CD14-positive monocyte (primary cell): ENCODE measurements at regions of chr22 and their contacts with region 1.

Region 1: GRCh38 chr22:32528984-32529982 is 54.7 kb downstream of the FBXO7 start:
- DNase-seq: peak; percentile 45 to 66 (median 51)
- H3K4me3 ChIP-seq: no peak overlapping the region
- H3K4me3 Mint-ChIP-seq: no peak overlapping the region
- H3K27ac ChIP-seq: no peak overlapping the region
- H3K27ac Mint-ChIP-seq: peak overlapping the region in 2 of 7 donors; percentile 3 to 33
- H3K4me1 ChIP-seq: no peaks in the 10 kb centered on the region
- H3K4me1 Mint-ChIP-seq: peaks cover 4% of the 10 kb centered on the region
- H3K27me3 ChIP-seq: no peaks in the 10 kb centered on the region
- H3K27me3 Mint-ChIP-seq: peaks cover 1 to 9% (median 3%) of the 10 kb centered on the region in 3 donors
- CTCF ChIP-seq: peak; percentile 83

Region 2: DNA sequence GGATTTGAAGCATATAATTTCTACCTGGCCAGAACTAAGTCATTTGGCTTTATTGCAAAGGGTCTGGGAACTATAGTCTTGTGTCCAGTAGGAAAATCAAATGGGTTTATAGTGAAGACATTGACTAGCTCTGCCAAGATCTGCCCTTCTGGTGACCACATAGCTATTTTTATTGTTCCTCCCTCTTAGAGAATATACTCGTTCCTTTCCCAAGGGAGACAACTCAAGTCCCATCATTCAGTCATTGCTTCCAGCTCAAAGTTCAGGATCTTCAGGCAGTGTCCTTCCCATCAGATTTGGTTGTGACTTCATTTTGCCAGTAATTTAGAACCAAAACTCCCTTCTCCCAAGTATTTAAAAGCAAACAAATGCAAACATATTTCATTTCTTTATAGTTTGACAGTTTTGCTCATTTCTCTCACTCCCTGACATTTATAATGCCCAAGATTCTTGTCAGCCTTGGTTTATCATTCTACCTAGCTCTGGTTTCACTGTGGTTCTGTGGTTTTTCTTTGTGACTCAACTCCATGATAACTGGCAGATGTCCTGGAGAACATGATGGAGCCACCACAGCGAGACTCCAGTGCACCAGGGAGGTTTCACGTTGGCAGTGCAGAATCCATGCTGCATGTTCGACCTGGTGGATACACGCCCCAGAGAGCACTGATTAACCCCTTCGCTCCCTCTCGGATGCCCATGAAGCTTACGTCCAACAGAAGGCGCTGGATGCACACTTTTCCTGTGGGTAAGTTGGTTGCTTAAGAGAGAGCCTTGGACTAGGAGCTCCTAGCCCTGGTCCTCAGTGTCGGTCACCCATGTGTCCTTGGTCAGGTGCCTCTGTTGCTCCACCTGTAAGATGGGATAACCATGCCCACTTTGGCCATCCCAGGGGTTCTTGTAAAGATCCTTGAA is 710.5 kb before region 1 on chr22:
- intact Hi-C with region 1: no loop called
- DNase-seq: no peak
- H3K4me3 ChIP-seq: no peak overlapping the region
- H3K4me3 Mint-ChIP-seq: no peak overlapping the region
- H3K27ac ChIP-seq: no peak overlapping the region
- H3K27ac Mint-ChIP-seq: no peak overlapping the region
- H3K4me1 ChIP-seq: no peaks in the 10 kb centered on the region
- H3K4me1 Mint-ChIP-seq: no peaks in the 10 kb centered on the region
- H3K27me3 ChIP-seq: no peaks in the 10 kb centered on the region
- H3K27me3 Mint-ChIP-seq: peaks cover 0 to 2% (median 0%) of the 10 kb centered on the region in 3 donors
- CTCF ChIP-seq: no peak

Region 3: DNA sequence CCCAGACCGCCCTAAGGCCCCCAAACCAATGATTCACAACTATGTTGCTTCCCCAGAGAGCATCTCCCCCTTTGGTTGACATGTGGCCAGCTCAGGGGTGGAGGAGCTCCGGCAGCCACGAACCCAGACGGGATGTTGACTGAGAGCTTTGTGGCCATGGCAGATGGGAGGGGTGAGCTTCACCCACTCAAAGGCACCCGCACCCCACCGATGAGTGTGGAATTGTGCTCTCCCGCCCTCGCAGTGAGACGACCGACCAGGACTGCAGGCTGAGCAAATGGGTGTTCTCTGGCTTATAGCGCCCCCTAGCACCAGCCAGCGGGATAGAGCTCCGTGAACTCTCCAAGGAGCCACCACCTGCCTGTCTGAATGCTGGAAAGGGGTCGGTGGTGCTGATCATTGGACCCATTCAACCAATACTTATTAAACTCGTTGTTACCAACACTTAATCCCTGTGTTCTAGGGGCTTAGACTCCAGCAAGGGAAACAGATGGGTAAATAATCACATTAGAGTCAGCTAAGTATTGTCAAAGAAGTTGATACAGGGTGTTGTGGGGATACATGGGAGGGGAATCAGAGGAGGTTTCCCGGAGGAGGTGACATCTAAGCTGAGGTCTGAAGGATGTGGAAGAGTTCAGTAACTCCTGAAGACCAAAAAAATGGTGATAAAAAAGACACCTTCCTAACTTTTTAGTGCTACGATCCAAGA is 267.7 kb after region 1 on chr22:
- intact Hi-C with region 1: loop called (anchors 1 to 2 kb)
- DNase-seq: peak; percentile 40 to 62 (median 56)
- H3K4me3 ChIP-seq: no peak overlapping the region
- H3K4me3 Mint-ChIP-seq: no peak overlapping the region
- H3K27ac ChIP-seq: no peak overlapping the region
- H3K27ac Mint-ChIP-seq: no peak overlapping the region
- H3K4me1 ChIP-seq: peaks cover 0 to 5% of the 10 kb centered on the region in 2 donors
- H3K4me1 Mint-ChIP-seq: peaks cover 6% of the 10 kb centered on the region
- H3K27me3 ChIP-seq: peaks cover 10 to 25% of the 10 kb centered on the region in 2 donors
- H3K27me3 Mint-ChIP-seq: peaks cover 26 to 48% (median 26%) of the 10 kb centered on the region in 3 donors
- CTCF ChIP-seq: peak; percentile 86

Region 4: DNA sequence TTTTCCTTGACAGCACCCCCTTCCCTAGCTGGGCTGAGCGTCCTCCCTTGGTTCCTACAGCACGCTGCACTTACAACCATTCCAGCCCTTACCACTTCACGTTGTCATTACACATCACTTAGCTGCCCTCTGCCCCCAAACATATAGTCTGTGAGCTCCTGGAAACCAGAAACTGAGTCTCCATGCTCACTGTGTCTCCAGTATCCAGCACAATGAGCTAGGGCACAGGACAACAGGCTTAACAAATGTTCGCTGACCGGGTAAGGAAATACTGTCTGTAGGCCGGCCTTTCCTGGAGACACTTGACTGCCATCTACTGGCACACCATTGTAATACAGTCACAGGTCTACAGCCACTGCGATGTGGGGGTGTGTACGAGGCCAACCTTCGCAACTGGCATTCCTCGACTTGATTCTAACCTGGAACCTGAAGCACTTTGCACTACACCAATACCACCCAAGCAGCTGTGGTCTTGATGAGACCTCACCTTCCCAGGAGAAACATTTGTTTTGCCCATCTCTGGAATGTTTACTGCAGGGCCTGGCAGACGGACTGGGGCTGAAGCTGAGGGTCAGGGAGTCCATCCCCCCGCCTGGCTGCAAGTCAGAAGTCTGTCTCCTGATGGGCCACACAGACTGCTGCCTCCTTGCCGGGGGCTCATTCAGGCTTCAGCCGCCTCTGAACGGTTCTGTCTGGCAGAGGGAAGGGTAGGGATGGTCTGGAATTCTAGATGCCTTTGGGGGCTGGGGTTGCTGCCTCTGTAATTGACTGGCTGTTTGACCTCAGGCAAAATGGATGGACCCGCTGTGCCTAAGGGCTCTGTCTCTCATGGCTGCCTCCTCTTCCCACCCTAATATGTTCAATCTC is 456.8 kb after region 1 on chr22:
- intact Hi-C with region 1: loop called in 1 of 2 experiments (anchors 5 kb)
- DNase-seq: peak; percentile 7 to 41 (median 37)
- H3K4me3 ChIP-seq: no peak overlapping the region
- H3K4me3 Mint-ChIP-seq: no peak overlapping the region
- H3K27ac ChIP-seq: no peak overlapping the region
- H3K27ac Mint-ChIP-seq: no peak overlapping the region
- H3K4me1 ChIP-seq: no peaks in the 10 kb centered on the region
- H3K4me1 Mint-ChIP-seq: no peaks in the 10 kb centered on the region
- H3K27me3 ChIP-seq: no peaks in the 10 kb centered on the region
- H3K27me3 Mint-ChIP-seq: peaks cover 2 to 8% (median 2%) of the 10 kb centered on the region in 3 donors
- CTCF ChIP-seq: peak; percentile 73

Region 5: DNA sequence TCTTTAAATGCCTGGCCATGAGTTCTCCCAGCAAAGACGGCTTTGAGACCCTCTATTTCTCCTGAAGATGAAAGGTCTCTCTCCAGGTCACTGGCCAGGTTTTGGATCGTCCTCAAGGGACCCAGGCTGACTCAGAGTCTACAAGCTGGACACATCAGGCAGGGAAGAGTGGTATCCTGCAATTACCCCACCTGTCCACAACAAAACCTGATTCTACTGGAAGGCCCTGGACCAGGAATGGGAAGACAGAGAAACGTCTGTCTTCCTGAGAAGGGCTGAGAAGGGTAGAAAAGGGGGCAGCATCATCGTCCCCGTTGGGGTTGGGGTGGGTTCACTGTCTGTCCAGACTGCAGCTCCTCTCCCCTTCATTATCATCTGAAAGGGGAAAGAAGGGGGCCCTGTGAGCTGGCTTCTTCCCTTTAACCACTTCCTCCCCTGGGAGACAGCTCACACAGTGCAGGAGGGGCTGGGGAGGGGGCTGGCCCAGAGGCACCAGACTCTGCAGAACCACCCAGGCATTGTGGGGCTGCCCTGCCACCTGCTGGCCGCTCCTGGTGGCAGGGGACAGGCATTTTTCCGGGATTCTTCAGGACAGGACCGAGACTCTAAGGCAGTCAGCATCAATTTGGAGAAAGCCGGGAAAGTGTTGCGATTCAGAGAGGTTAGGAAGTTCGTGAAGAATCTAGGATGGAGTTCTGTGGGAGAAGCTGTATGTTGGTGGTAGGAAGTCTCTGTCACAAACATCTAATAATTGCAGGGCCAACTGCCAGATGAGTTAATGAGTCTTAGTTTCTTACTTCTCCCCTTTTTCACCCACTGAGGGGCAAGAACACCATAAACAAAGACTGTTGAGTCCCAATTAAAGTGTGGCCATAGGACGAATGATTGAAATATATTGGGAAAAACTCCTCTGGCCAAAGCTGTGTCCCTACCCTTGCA is 471.3 kb after region 1 on chr22:
- intact Hi-C with region 1: loop called (anchors 2 to 5 kb)
- DNase-seq: peak in 1 of 3 donors; percentile 3
- H3K4me3 ChIP-seq: no peak overlapping the region
- H3K4me3 Mint-ChIP-seq: no peak overlapping the region
- H3K27ac ChIP-seq: no peak overlapping the region
- H3K27ac Mint-ChIP-seq: no peak overlapping the region
- H3K4me1 ChIP-seq: no peaks in the 10 kb centered on the region
- H3K4me1 Mint-ChIP-seq: peaks cover 2% of the 10 kb centered on the region
- H3K27me3 ChIP-seq: no peaks in the 10 kb centered on the region
- H3K27me3 Mint-ChIP-seq: peaks cover 1 to 5% (median 4%) of the 10 kb centered on the region in 3 donors
- CTCF ChIP-seq: peak; percentile 74